ENCODE measurements at regions of chr4 and their contacts with region 1.

Region 1: DNA sequence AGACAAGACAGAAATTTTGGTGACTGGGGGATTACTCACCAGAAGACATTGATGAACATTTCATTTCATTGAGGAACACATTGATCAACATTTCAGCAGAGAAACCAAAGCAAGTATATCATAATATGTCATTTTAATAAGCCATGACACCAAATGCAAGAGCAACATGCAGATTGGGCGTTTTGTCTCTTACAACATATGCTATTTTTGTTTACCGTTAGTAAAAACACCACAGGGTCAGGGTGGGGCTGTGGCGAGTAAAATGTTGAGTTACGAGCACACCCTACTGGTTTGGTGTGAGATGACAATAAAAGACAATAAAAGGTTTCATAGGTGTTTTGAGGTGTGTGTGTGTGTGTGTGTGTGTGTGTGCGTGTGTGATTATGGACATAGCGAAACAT is 294.5 kb downstream of the PDGFC start:
- DNase-seq: peak in 1 of 2 experiments; percentile 33
- H3K4me3 ChIP-seq: no peak overlapping the region
- H3K4me3 Mint-ChIP-seq: no peak overlapping the region
- H3K27ac Mint-ChIP-seq: no peak overlapping the region
- H3K4me1 ChIP-seq: no peaks in the 10 kb centered on the region
- H3K4me1 Mint-ChIP-seq: no peaks in the 10 kb centered on the region
- H3K27me3 ChIP-seq: no peaks in the 10 kb centered on the region
- H3K27me3 Mint-ChIP-seq: peaks cover 4% of the 10 kb centered on the region
- CTCF ChIP-seq: peak; percentile 25 to 43

Region 2: DNA sequence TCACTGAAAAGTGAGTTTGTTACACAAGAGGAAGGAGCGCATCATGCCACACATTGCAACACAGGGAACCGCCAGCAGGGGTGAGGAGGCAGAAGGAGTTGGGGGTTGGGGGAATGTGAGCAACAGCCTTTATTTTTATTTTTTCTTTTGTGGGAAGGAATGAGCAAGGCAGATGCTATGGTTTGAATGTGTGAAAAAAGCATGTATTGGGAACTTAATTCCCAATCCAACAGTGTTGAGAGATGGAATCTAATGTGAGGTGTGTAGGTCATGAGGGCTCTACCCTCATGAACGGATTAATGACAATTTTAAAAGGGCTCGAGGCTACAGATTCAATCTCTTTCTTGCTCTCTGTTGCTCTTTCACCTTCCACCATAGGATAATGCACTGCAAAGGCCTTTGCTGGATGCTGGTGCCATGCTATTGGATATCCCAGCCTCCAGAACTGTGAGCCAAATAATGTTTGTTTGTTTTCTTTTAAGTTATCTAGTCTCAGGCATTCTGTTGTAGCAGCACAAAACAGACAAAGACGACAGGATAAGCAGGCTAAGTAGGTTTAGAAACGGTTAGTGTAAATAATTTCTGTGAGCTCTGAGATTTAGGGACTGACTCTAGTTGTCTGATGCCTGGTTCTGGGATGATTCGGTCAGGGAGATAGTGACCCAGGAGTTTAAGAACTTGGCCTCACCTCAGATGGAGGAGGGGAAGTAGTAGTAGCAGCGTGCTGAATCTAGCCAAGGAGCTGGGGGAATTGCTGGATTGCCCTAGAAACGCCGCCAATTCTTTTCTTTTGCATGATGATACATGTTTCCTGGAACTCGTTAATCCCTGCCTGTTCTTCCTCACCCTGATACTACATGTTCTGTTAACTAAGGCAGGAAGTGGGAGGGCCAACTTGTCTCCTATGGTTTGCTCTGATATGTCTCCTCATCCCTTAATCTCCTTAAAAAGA is 566.9 kb before region 1 on chr4:
- CTCF ChIA-PET with region 1: no interaction called
- POLR2A ChIA-PET with region 1: no interaction called
- intact Hi-C with region 1: loop called (anchors 5 kb)
- DNase-seq: peak in 1 of 2 experiments; percentile 11
- H3K4me3 ChIP-seq: no peak overlapping the region
- H3K4me3 Mint-ChIP-seq: no peak overlapping the region
- H3K27ac Mint-ChIP-seq: no peak overlapping the region
- H3K4me1 ChIP-seq: no peaks in the 10 kb centered on the region
- H3K4me1 Mint-ChIP-seq: no peaks in the 10 kb centered on the region
- H3K27me3 ChIP-seq: no peaks in the 10 kb centered on the region
- H3K27me3 Mint-ChIP-seq: no peaks in the 10 kb centered on the region
- CTCF ChIP-seq: no peak

Region 3: GRCh38 chr4:156169011-156169410 is 508.1 kb before region 1 on chr4:
- CTCF ChIA-PET with region 1: no interaction called
- POLR2A ChIA-PET with region 1: no interaction called
- intact Hi-C with region 1: loop called (anchors 1 kb)
- DNase-seq: peak; percentile 38 to 43
- H3K4me3 ChIP-seq: no peak overlapping the region
- H3K4me3 Mint-ChIP-seq: no peak overlapping the region
- H3K27ac Mint-ChIP-seq: no peak overlapping the region
- H3K4me1 ChIP-seq: no peaks in the 10 kb centered on the region
- H3K4me1 Mint-ChIP-seq: peaks cover 8% of the 10 kb centered on the region
- H3K27me3 ChIP-seq: no peaks in the 10 kb centered on the region
- H3K27me3 Mint-ChIP-seq: peaks cover 7% of the 10 kb centered on the region
- CTCF ChIP-seq: peak; percentile 42 to 60

Region 4: DNA sequence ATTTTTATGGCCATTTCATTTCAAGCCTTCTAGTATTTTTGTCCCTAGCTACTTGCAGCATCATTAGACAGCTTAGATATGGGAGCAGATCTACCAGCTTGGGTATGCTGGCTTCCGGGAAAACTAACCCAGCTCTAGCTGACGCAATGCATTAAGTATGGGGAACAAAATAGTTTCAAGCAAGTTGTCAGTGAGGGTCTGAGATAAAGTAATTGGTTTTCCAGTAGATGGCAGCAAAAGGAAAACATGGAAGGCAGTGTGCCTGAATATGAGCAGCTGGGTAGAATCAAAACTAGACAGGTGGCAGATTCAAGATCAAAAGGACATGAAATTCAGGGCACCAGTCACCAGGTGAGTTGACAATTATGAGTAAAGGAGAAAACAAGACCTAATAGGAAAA is 382.6 kb before region 1 on chr4:
- CTCF ChIA-PET with region 1: no interaction called
- POLR2A ChIA-PET with region 1: no interaction called
- intact Hi-C with region 1: loop called (anchors 1 kb)
- DNase-seq: peak in 1 of 2 experiments; percentile 8
- H3K4me3 ChIP-seq: no peak overlapping the region
- H3K4me3 Mint-ChIP-seq: no peak overlapping the region
- H3K27ac Mint-ChIP-seq: no peak overlapping the region
- H3K4me1 ChIP-seq: peaks cover 16% of the 10 kb centered on the region
- H3K4me1 Mint-ChIP-seq: peaks cover 15% of the 10 kb centered on the region
- H3K27me3 ChIP-seq: no peaks in the 10 kb centered on the region
- H3K27me3 Mint-ChIP-seq: no peaks in the 10 kb centered on the region
- CTCF ChIP-seq: peak in 1 of 2 experiments; percentile 40

Region 5: GRCh38 chr4:156475322-156475721 is 201.8 kb before region 1 on chr4:
- CTCF ChIA-PET with region 1: interaction called, 5 read pairs
- POLR2A ChIA-PET with region 1: no interaction called
- intact Hi-C with region 1: loop called (anchors 1 kb)
- DNase-seq: peak in 1 of 2 experiments; percentile 5
- H3K4me3 ChIP-seq: no peak overlapping the region
- H3K4me3 Mint-ChIP-seq: no peak overlapping the region
- H3K27ac Mint-ChIP-seq: no peak overlapping the region
- H3K4me1 ChIP-seq: no peaks in the 10 kb centered on the region
- H3K4me1 Mint-ChIP-seq: no peaks in the 10 kb centered on the region
- H3K27me3 ChIP-seq: no peaks in the 10 kb centered on the region
- H3K27me3 Mint-ChIP-seq: no peaks in the 10 kb centered on the region
- CTCF ChIP-seq: peak; percentile 29 to 46

Region 6: GRCh38 chr4:156594624-156595023 is 82.5 kb before region 1 on chr4:
- CTCF ChIA-PET with region 1: no interaction called
- POLR2A ChIA-PET with region 1: no interaction called
- intact Hi-C with region 1: loop called (anchors 10 kb)
- DNase-seq: no peak
- H3K4me3 ChIP-seq: no peak overlapping the region
- H3K4me3 Mint-ChIP-seq: no peak overlapping the region
- H3K27ac Mint-ChIP-seq: no peak overlapping the region
- H3K4me1 ChIP-seq: peaks cover 11% of the 10 kb centered on the region; the same call in 1 of the 2 replicates
- H3K4me1 Mint-ChIP-seq: peaks cover 7% of the 10 kb centered on the region
- H3K27me3 ChIP-seq: no peaks in the 10 kb centered on the region
- H3K27me3 Mint-ChIP-seq: no peaks in the 10 kb centered on the region
- CTCF ChIP-seq: no peak

Region 7: GRCh38 chr4:156870131-156870530 is 193.0 kb after region 1 on chr4:
- CTCF ChIA-PET with region 1: no interaction called
- POLR2A ChIA-PET with region 1: no interaction called
- intact Hi-C with region 1: no loop called
- DNase-seq: no peak
- H3K4me3 ChIP-seq: no peak overlapping the region
- H3K4me3 Mint-ChIP-seq: no peak overlapping the region
- H3K27ac Mint-ChIP-seq: no peak overlapping the region
- H3K4me1 ChIP-seq: no peaks in the 10 kb centered on the region
- H3K4me1 Mint-ChIP-seq: no peaks in the 10 kb centered on the region
- H3K27me3 ChIP-seq: no peaks in the 10 kb centered on the region
- H3K27me3 Mint-ChIP-seq: no peaks in the 10 kb centered on the region
- CTCF ChIP-seq: no peak

Region 8: GRCh38 chr4:157045507-157046127 is 368.5 kb after region 1 on chr4:
- CTCF ChIA-PET with region 1: no interaction called
- POLR2A ChIA-PET with region 1: no interaction called
- intact Hi-C with region 1: loop called (anchors 1 kb)
- DNase-seq: peak; percentile 31 to 48
- H3K4me3 ChIP-seq: no peak overlapping the region
- H3K4me3 Mint-ChIP-seq: no peak overlapping the region
- H3K27ac Mint-ChIP-seq: no peak overlapping the region
- H3K4me1 ChIP-seq: no peaks in the 10 kb centered on the region
- H3K4me1 Mint-ChIP-seq: no peaks in the 10 kb centered on the region
- H3K27me3 ChIP-seq: no peaks in the 10 kb centered on the region
- H3K27me3 Mint-ChIP-seq: peaks cover 7% of the 10 kb centered on the region
- CTCF ChIP-seq: peak; percentile 56 to 75